AG04449 (cell line): ENCODE measurements at regions of chr4 and their contacts with region 1.

Region 1: GRCh38 chr4:109977854-109978501 is 65.3 kb downstream of the EGF start:
- DNase-seq: no peak
- H3K4me3 ChIP-seq: no peak overlapping the region
- CTCF ChIP-seq: peak; percentile 38

Region 2: GRCh38 chr4:109701566-109702405 is 276.2 kb before region 1 on chr4:
- CTCF ChIA-PET with region 1: interaction called, 11 read pairs
- POLR2A ChIA-PET with region 1: no interaction called
- DNase-seq: no peak
- H3K4me3 ChIP-seq: peak overlapping the region; percentile 92
- CTCF ChIP-seq: no peak

Region 3: DNA sequence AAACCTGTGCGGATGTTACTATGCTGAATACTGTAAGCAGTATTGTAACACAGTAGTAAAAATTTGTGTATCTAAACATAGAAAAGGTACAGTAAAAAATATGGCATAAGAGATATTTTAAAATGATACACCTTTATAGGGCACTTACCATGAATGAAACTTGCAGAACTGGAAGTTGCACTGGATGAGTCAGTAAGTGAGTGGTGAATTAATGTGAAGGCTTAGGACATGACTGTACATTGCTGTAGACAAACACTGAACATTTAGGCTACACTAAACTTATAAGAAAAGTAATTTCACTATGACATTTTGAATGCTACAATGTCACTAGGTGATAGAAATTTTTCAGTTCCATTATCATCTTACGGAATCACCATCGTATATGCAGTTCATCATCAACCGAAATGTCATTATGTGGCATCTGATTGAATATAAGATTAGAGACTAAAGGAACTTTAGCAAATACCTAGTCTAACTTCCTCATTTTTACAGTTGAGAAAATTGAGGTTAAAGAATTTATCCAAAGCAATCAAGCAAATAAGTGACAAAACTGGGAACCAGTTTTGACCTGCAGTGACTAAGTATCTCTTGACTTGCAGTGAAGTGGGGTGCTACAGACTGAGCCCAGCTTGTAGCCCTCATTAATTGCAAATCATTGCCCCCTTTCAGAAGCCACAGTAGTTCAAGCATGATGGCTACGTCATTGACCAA is 10.0 kb before region 1 on chr4:
- CTCF ChIA-PET with region 1: interaction called, 13 read pairs
- POLR2A ChIA-PET with region 1: no interaction called
- DNase-seq: no peak
- H3K4me3 ChIP-seq: no peak overlapping the region
- CTCF ChIP-seq: no peak